Heart left ventricle (tissue), 16 donors: ENCODE measurements at regions of chr11 and their contacts with region 1.

Region 1: GRCh38 chr11:9613118-9613829 is 39.8 kb downstream of the WEE1 start:
- DNase-seq: peak; percentile 94 to 96 (median 95)
- ATAC-seq: peak; percentile 92 to 94 (median 94)
- H3K4me3 ChIP-seq: peak overlapping the region; percentile 16 to 69 (median 54)
- H3K27ac ChIP-seq: peak overlapping the region; percentile 95 to 100 (median 97)
- H3K4me1 ChIP-seq: peaks cover 0 to 28% (median 17%) of the 10 kb centered on the region in 12 donors
- H3K27me3 ChIP-seq: no peaks in the 10 kb centered on the region
- CTCF ChIP-seq: peak in 11 of 12 donors; percentile 91 to 99 (median 97)
- POLR2A ChIP-seq: peak in 1 of 2 donors; percentile 40

Region 2: DNA sequence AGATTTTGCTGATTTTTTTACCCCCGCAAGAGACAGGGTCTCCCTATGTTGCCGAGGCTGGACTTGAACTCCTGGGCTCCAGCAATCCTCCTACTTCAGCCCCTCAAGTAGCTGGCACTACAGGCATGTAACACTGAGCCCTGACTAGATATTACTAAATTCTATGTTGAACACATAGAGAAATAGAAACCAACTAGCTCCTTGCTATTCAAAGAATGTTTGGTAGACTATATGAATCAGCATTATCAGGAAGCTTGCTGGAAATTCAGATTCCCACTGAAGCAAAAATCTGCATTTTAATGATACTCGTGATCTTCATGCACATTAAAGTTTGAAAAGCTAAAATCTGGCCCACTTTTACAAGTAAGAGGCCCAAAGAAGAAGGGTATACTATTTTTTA is 310.8 kb before region 1 on chr11:
- intact Hi-C with region 1: no loop called
- DNase-seq: no peak
- ATAC-seq: no peak
- H3K4me3 ChIP-seq: no peak overlapping the region
- H3K27ac ChIP-seq: no peak overlapping the region
- H3K4me1 ChIP-seq: peaks cover 0 to 4% (median 0%) of the 10 kb centered on the region in 12 donors
- H3K27me3 ChIP-seq: no peaks in the 10 kb centered on the region
- CTCF ChIP-seq: no peak
- POLR2A ChIP-seq: no peak

Region 3: GRCh38 chr11:9448576-9449352 is 164.5 kb before region 1 on chr11:
- intact Hi-C with region 1: no loop called
- DNase-seq: no peak
- ATAC-seq: no peak
- H3K4me3 ChIP-seq: no peak overlapping the region
- H3K27ac ChIP-seq: no peak overlapping the region
- H3K4me1 ChIP-seq: no peaks in the 10 kb centered on the region
- H3K27me3 ChIP-seq: no peaks in the 10 kb centered on the region
- CTCF ChIP-seq: no peak
- POLR2A ChIP-seq: no peak

Region 4: DNA sequence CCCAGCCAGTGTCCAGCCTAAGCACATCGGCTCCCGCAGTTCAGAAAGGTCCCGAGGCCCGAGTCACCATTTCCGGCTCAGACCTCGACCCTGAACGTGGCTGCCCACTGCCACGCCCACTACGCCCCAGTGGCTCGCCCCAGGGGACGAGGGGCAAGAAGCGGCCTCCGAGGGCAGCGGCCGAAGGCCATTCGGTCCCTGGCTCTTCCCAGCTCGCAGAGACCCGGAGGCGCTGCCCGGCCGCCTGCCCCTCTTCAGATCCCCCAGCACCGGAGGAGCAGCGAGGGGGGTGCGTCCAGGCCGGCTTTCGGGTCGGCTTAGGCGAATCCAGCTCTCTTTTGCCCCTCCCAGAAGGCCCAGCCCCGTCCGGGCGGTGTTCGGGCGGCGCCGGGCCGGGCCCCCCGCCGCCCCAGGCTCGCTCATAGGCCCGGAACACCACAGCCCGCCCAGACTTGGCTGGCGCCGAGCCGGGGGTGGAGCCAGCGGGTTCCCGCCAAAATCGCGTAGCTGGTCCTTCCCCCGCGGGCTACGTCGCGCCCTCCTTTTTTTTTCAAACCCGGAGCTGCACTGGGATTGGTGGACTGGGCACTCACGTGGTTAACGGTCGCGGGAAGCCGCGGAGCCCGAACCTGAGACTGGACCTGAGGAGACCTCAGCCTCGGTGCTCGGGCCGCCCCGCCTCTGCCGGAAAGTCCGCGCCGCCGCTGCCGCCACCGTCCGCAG is 40.1 kb before region 1 on chr11 and contains the start of gene WEE1:
- intact Hi-C with region 1: loop called in 9 of 10 experiments (anchors 2 to 5 kb)
- DNase-seq: peak; percentile 98 to 100 (median 98)
- ATAC-seq: peak; percentile 86 to 97 (median 94)
- H3K4me3 ChIP-seq: peak within 1 kb of the TSS; percentile 42 to 90 (median 78)
- H3K27ac ChIP-seq: peak within 1 kb of the TSS; percentile 86 to 98 (median 96)
- H3K4me1 ChIP-seq: peaks cover 0 to 52% (median 20%) of the 10 kb centered on the region in 12 donors
- H3K27me3 ChIP-seq: no peaks in the 10 kb centered on the region
- CTCF ChIP-seq: no peak
- POLR2A ChIP-seq: peak in 1 of 2 donors; percentile 78
- total RNA-seq, gene WEE1: 33.0 to 89.2 (median 68.7) TPM

Region 5: GRCh38 chr11:9663699-9664275 is 50.5 kb after region 1 on chr11 and contains the start of gene SWAP70:
- intact Hi-C with region 1: loop called in 7 of 10 experiments (anchors 1 to 10 kb)
- DNase-seq: peak; percentile 92 to 96 (median 92)
- ATAC-seq: peak; percentile 83 to 98 (median 96)
- H3K4me3 ChIP-seq: peak within 1 kb of the TSS; percentile 74 to 99 (median 94)
- H3K27ac ChIP-seq: peak within 1 kb of the TSS; percentile 87 to 98 (median 94)
- H3K4me1 ChIP-seq: peaks cover 0 to 45% (median 5%) of the 10 kb centered on the region in 12 donors
- H3K27me3 ChIP-seq: no peaks in the 10 kb centered on the region
- CTCF ChIP-seq: peak in 11 of 12 donors; percentile 26 to 65 (median 43)
- POLR2A ChIP-seq: peak in 1 of 2 donors; percentile 67
- total RNA-seq, gene SWAP70: 16.7 to 38.5 (median 24.0) TPM

Region 6: GRCh38 chr11:9748361-9748970 is 135.2 kb after region 1 on chr11:
- intact Hi-C with region 1: loop called in 8 of 10 experiments (anchors 1 to 5 kb)
- DNase-seq: peak in 4 of 5 donors; percentile 53 to 57 (median 56)
- ATAC-seq: peak; percentile 84 to 91 (median 88)
- H3K4me3 ChIP-seq: no peak overlapping the region
- H3K27ac ChIP-seq: peak overlapping the region in 2 of 12 donors; percentile 41 to 53
- H3K4me1 ChIP-seq: peaks cover 0 to 24% (median 9%) of the 10 kb centered on the region in 12 donors
- H3K27me3 ChIP-seq: no peaks in the 10 kb centered on the region
- CTCF ChIP-seq: peak; percentile 61 to 82 (median 71)
- POLR2A ChIP-seq: no peak

Region 7: GRCh38 chr11:10307442-10308207 is 694.4 kb after region 1 on chr11:
- intact Hi-C with region 1: loop called in 3 of 10 experiments (anchors 5 to 10 kb)
- DNase-seq: peak; percentile 82 to 93 (median 88)
- ATAC-seq: peak; percentile 29 to 70 (median 69)
- H3K4me3 ChIP-seq: peak overlapping the region; percentile 16 to 88 (median 76)
- H3K27ac ChIP-seq: peak overlapping the region; percentile 4 to 90 (median 86)
- H3K4me1 ChIP-seq: peaks cover 0 to 72% (median 54%) of the 10 kb centered on the region in 12 donors
- H3K27me3 ChIP-seq: no peaks in the 10 kb centered on the region
- CTCF ChIP-seq: peak; percentile 95 to 100 (median 99)
- POLR2A ChIP-seq: peak in 1 of 2 donors; percentile 17